Ascending aorta (tissue), 2 donors: ENCODE measurements at regions of chr15 and their contacts with region 1.

Region 1: GRCh38 chr15:68277603-68278344 is at the start of gene FEM1B:
- DNase-seq: peak; percentile 56 to 94
- H3K4me3 ChIP-seq: peak within 1 kb of the TSS; percentile 74 to 93
- H3K27ac ChIP-seq: peak within 1 kb of the TSS; percentile 99
- H3K4me1 ChIP-seq: peaks cover 3 to 24% of the 10 kb centered on the region in 2 donors
- H3K27me3 ChIP-seq: no peaks in the 10 kb centered on the region
- CTCF ChIP-seq: no peak
- total RNA-seq, gene FEM1B: 57.0 TPM

Region 2: DNA sequence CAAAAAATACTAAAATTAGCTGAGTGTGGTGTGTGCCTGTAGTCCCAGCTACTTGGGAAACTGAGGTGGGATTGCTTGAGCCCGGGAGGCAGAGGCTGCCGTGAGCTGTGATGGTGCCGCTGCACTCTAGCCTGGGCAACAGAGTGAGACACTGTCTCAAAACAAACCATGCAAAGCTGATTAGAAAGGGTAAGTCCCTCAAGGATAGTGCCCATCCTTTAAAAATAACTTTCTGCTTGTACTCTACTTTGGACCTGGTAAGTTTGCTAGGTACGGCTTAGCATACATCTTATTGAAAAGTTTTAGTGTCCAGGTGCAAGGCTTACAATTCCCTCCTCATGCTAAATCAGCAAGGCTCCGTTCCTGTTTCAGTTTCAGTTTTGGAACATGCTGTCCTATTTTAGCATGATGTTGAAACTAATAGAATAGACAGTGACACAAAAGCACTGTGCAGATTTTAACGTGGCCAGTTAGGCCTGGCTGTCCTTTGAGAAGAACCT is 21.2 kb after region 1 on chr15:
- intact Hi-C with region 1: loop called (anchors 2 kb)
- DNase-seq: peak in 1 of 2 donors; percentile 31
- H3K4me3 ChIP-seq: peak overlapping the region; percentile 43 to 50
- H3K27ac ChIP-seq: peak overlapping the region; percentile 35 to 60
- H3K4me1 ChIP-seq: peaks cover 0 to 16% of the 10 kb centered on the region in 2 donors
- H3K27me3 ChIP-seq: no peaks in the 10 kb centered on the region
- CTCF ChIP-seq: no peak